Caco-2 (cell line): ENCODE measurements at regions of chr17 and their contacts with region 1.

Region 1: DNA sequence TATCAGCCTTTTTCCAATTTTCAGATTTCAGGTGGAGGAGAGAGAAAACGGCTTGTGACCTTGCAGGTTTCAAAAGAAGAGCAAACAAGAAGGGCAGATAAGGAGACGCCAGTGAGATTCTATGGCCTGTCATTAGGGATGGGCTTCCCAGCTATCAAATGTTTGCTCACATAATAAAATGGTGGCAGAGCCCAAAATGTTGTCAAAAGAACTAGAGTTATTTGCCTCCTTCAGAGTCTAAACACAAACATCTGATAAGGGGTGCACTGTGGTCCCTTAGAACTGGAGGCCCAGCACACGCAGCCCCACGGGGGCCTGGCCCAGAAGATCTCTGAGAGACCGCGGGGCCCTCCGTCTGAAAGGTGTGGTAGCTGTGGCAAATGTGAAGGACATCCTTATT is 46.1 kb upstream of the DDX52 start:
- DNase-seq: peak; percentile 84 to 90
- H3K4me3 ChIP-seq: no peak overlapping the region
- H3K4me3 Mint-ChIP-seq: peak overlapping the region; percentile 47
- H3K27ac Mint-ChIP-seq: peak overlapping the region; percentile 75
- H3K4me1 ChIP-seq: peaks cover 71% of the 10 kb centered on the region
- H3K4me1 Mint-ChIP-seq: peaks cover 57% of the 10 kb centered on the region
- H3K27me3 ChIP-seq: no peaks in the 10 kb centered on the region
- H3K27me3 Mint-ChIP-seq: no peaks in the 10 kb centered on the region
- CTCF ChIP-seq: no peak

Region 2: DNA sequence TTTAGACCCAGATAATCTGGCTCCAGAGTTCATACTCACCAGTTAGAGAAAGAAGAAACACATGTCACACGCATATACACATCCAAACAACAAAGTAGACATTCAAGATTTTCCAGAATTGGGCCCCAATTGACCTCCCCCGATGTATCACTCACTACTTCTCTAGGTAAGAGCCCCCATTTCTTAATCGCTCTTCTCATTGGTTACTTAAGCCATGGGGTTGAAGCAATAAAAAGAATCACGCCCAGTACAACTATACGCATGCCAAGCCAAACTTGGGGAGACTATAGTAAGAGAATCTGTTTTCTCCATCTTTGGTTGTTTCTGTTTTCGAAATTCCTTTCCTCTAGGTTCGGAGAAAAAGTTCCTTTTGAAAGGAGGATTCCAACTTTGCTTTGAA is 46.6 kb before region 1 on chr17:
- CTCF ChIA-PET with region 1: interaction called, 3 read pairs
- POLR2A ChIA-PET with region 1: no interaction called
- intact Hi-C with region 1: loop called (anchors 1 kb)
- DNase-seq: peak in 1 of 2 experiments; percentile 12
- H3K4me3 ChIP-seq: peak overlapping the region; percentile 88
- H3K4me3 Mint-ChIP-seq: peak overlapping the region; percentile 92
- H3K27ac Mint-ChIP-seq: peak overlapping the region; percentile 65
- H3K4me1 ChIP-seq: peaks cover 17% of the 10 kb centered on the region
- H3K4me1 Mint-ChIP-seq: peaks cover 41% of the 10 kb centered on the region
- H3K27me3 ChIP-seq: no peaks in the 10 kb centered on the region
- H3K27me3 Mint-ChIP-seq: no peaks in the 10 kb centered on the region
- CTCF ChIP-seq: no peak